Prostate gland (tissue), 2 donors: ENCODE measurements at regions of chr6 and their contacts with region 1.

Region 1: DNA sequence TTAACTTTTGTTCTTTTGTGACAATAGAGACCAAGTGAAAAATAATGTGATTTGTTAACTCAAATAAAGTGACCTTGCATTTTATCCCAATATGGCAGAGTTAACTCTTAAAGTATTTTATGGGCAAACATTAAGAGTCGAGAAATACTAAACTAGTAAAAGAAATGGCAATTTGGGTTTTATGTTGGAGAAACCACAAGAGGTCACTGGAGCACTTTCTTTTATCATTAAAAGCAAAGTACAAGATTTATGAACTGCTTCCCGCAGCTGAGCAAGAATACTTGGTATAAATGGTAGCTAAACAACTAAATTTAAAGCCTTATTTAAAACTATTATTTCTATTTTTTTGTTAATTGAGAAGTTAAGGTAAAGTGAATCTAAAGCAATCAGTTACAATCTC is 33.5 kb upstream of the MCM9 start:
- DNase-seq: no peak
- H3K4me3 ChIP-seq: no peak overlapping the region
- H3K27ac ChIP-seq: no peak overlapping the region
- H3K4me1 ChIP-seq: no peaks in the 10 kb centered on the region
- H3K27me3 ChIP-seq: no peaks in the 10 kb centered on the region
- CTCF ChIP-seq: peak in 3 of 4 experiments; percentile 24 to 59 (median 49)
- POLR2A ChIP-seq: no peak

Region 2: GRCh38 chr6:119110601-119111548 is 142.5 kb after region 1 on chr6:
- intact Hi-C with region 1: loop called (anchors 2 kb)
- DNase-seq: peak; percentile 38
- H3K4me3 ChIP-seq: no peak overlapping the region
- H3K27ac ChIP-seq: no peak overlapping the region
- H3K4me1 ChIP-seq: no peaks in the 10 kb centered on the region
- H3K27me3 ChIP-seq: no peaks in the 10 kb centered on the region
- CTCF ChIP-seq: peak; percentile 24 to 78 (median 59)
- POLR2A ChIP-seq: no peak